ENCODE measurements at regions of chr3 and their contacts with region 1.

Region 1: DNA sequence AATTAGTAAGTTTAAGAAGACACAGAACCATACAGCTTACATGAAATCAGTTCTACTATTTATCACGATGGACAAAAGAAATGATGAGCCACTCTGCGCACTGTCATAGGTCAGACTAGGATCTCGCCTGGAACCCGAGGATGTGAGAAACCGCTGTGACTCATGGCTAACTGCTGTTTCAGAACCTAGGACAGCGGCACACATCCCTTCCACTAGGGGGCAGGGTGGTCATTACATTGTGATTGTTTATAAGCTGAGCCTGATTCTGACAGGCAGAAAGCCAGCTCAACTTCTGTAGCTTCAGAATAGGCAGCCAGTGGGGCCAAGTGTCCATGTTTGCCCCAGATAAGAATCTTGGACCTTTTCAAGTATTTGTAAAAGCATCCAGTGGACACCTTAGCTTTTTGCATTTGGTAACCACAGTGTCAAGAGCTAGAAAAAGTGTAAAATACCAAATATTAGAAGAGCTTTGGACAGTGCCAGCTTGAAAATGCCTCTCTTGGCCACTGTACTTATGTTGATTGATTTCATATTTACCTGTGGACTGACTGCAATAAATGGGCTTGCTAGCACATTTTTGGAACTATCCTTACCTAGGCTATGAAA is 115.8 kb downstream of the KBTBD8 start:
- DNase-seq: peak; percentile 78
- H3K4me3 ChIP-seq: no peak overlapping the region
- H3K27ac ChIP-seq: no peak overlapping the region
- H3K4me1 ChIP-seq: no peaks in the 10 kb centered on the region
- H3K27me3 ChIP-seq: no peaks in the 10 kb centered on the region
- CTCF ChIP-seq: peak; percentile 99

Region 2: DNA sequence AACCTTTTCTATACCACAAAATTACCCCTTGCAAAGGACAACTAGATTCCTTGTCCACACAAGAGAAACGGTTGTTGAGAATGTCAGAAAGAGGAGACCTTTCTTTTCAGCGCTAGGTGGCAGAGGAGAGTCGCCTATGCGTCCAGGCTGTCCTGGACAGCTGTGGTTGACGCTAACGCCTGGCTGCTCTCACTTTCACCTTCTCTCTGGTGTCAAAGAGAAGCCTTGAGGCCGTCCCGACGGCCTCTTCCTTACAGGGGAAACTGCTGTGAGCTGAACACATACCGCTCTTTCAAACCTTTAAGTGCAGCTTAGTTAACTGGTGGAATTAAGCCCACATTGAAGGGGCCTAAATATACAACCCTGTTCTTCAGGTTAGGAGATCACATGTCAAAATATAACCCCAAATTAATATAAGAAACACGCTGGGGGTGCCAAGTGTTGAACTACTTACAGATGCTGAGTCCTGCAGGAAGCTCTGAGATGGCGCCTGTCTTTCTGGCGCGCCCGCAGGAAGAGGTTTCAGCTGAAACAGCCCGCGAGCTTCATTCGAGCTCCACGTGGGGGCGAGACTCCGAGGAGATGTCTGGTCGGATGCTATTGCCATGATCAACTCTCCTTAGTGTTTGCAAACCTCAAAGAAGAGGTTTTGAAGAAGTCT is 141.9 kb before region 1 on chr3:
- CTCF ChIA-PET with region 1: no interaction called
- dilution Hi-C with region 1: no loop called
- in situ Hi-C with region 1: no loop called
- intact Hi-C with region 1: loop called (anchors 1 kb)
- DNase-seq: peak; percentile 43
- H3K4me3 ChIP-seq: peak overlapping the region; percentile 8 to 19 (median 14)
- H3K27ac ChIP-seq: no peak overlapping the region
- H3K4me1 ChIP-seq: no peaks in the 10 kb centered on the region
- H3K27me3 ChIP-seq: peaks cover 3% of the 10 kb centered on the region
- CTCF ChIP-seq: peak; percentile 83 to 85

Region 3: GRCh38 chr3:66998113-66998903 is 115.6 kb before region 1 on chr3 and contains the start of gene KBTBD8:
- CTCF ChIA-PET with region 1: interaction called, 31 read pairs
- dilution Hi-C with region 1: no loop called
- in situ Hi-C with region 1: no loop called
- intact Hi-C with region 1: loop called (anchors 5 kb)
- DNase-seq: peak; percentile 99
- H3K4me3 ChIP-seq: peak within 1 kb of the TSS; percentile 62 to 82 (median 80)
- H3K27ac ChIP-seq: peak within 1 kb of the TSS; percentile 49
- H3K4me1 ChIP-seq: peaks cover 23% of the 10 kb centered on the region
- H3K27me3 ChIP-seq: no peaks in the 10 kb centered on the region
- CTCF ChIP-seq: no peak
- total RNA-seq, gene KBTBD8: 3.5 to 3.7 TPM

Region 4: DNA sequence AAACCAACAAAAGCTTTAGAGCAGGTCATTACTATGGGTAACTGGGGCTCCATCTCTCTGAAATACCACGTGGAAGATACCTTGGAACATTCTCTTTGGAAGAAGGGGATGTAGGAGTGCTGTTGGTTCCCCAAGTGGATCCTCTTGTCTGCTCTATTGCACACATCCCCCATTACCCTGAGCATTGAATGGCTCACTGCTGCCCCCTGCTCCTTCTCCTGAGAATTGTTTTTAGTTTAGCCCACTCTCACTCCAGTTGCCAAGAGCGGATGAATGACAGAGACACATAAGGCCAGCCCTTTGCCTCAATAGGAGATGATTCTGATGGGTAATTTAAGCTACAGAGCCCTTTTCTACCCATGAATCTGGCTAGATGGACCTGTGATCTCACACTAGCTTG is 676.1 kb after region 1 on chr3:
- CTCF ChIA-PET with region 1: interaction called, 4 read pairs
- dilution Hi-C with region 1: no loop called
- in situ Hi-C with region 1: no loop called
- intact Hi-C with region 1: loop called (anchors 1 kb)
- DNase-seq: peak; percentile 30
- H3K4me3 ChIP-seq: no peak overlapping the region
- H3K27ac ChIP-seq: no peak overlapping the region
- H3K4me1 ChIP-seq: no peaks in the 10 kb centered on the region
- H3K27me3 ChIP-seq: no peaks in the 10 kb centered on the region
- CTCF ChIP-seq: peak; percentile 41 to 71

Region 5: DNA sequence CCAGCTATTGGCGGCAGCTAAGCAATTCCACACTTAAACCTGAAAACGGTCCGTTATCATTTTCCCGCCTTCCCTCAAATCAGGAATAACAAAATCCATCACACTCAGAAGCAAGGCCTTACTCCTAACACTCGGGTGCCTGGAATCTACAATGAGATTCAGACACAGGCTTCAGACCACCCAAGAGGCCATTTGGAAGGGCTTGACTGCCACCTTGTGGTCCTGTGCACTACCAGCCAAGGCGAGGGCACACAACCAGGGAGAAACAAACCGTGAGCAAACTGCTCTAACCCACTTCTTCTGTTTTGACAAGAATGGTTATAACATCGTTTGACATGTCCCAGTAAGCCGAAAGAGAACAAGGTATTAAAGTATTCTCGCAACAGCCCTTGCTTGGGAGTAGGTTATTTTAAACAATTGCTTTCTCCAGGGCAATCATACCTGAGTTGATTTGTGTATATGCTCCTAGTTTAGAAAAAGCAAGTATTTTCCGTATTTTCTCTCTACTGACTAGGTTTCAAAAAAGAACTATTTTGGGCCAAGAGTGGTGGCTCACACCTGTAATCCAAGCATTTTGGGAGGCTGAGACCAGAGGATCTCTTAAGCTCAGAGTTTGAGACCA is 1858.6 kb after region 1 on chr3:
- CTCF ChIA-PET with region 1: no interaction called
- dilution Hi-C with region 1: no loop called
- in situ Hi-C with region 1: no loop called
- intact Hi-C with region 1: loop called (anchors 5 kb)
- DNase-seq: peak; percentile 38
- H3K4me3 ChIP-seq: no peak overlapping the region
- H3K27ac ChIP-seq: no peak overlapping the region
- H3K4me1 ChIP-seq: no peaks in the 10 kb centered on the region
- H3K27me3 ChIP-seq: peaks cover 6% of the 10 kb centered on the region
- CTCF ChIP-seq: peak; percentile 80 to 86

Measured in mammary epithelial cell (primary cell).